ENCODE measurements at regions of chr3 and their contacts with region 1.

Region 1: GRCh38 chr3:194134757-194135528 is 1.0 kb upstream of the HES1 start:
- DNase-seq: peak; percentile 91 to 97 (median 95)
- H3K4me3 ChIP-seq: peak overlapping the region in 6 of 7 experiments; percentile 28 to 71 (median 64)
- H3K27ac ChIP-seq: peak overlapping the region in 1 of 2 experiments; percentile 68
- H3K4me1 ChIP-seq: peaks cover 16 to 62% (median 59%) of the 10 kb centered on the region in 4 experiments
- H3K27me3 ChIP-seq: peaks cover 0 to 63% (median 22%) of the 10 kb centered on the region in 5 experiments

Region 2: DNA sequence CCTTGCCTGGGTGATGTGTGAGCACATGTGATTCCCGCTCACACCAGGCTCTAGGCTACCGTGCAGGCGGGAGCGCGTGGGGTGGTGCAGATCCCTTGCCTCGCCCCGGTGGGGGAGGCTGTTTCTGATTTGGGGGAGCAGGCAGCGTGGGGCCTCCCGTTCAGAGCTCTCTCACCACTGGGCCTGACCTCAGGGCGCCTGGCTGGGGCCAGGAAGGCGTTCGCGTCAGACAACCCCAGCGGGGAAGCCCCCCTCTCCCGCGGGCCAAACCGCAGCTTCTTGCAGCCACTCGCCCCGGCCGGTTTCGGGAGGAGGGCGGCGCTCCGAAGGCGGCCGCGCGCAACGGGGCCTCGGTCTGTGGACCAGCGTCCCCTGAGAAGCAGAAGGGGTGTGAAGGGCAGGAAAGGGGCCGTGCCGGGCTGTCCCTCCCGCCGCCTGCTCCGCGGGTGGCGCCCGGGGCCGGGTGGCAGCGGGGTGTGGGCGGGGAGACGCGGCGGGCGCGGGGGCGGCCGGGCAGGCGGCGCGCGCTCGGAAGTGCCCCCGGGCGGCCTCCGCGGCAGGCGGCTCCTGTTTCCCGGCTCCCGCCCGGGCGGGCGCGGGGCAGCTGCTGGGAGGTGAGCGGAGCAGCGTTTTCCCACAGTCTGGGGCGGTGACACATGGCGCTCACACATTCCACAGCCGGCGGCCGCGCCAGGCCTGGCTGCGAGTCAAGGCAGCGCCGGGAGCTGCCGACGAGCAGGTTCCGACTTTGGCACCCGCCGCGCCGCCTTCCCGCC is 64.1 kb before region 1 on chr3:
- CTCF ChIA-PET with region 1: interaction called, 3 read pairs
- POLR2A ChIA-PET with region 1: interaction called, 11 read pairs
- DNase-seq: peak; percentile 89 to 96 (median 93)
- H3K4me3 ChIP-seq: peak overlapping the region; percentile 3 to 71 (median 58)
- H3K27ac ChIP-seq: no peak overlapping the region
- H3K4me1 ChIP-seq: peaks cover 0 to 22% (median 18%) of the 10 kb centered on the region in 4 experiments
- H3K27me3 ChIP-seq: peaks cover 0 to 4% (median 0%) of the 10 kb centered on the region in 5 experiments

Region 3: GRCh38 chr3:194189243-194189791 is 54.4 kb after region 1 on chr3:
- CTCF ChIA-PET with region 1: no interaction called
- POLR2A ChIA-PET with region 1: no interaction called
- DNase-seq: no peak
- H3K4me3 ChIP-seq: no peak overlapping the region
- H3K27ac ChIP-seq: no peak overlapping the region
- H3K4me1 ChIP-seq: peaks cover 0 to 42% (median 7%) of the 10 kb centered on the region in 4 experiments
- H3K27me3 ChIP-seq: no peaks in the 10 kb centered on the region